Activated B cell treated with CpG ODN at 0.5 μM for 24 hours (primary cell): ENCODE measurements at regions of chrX and their contacts with region 1.

Region 1: DNA sequence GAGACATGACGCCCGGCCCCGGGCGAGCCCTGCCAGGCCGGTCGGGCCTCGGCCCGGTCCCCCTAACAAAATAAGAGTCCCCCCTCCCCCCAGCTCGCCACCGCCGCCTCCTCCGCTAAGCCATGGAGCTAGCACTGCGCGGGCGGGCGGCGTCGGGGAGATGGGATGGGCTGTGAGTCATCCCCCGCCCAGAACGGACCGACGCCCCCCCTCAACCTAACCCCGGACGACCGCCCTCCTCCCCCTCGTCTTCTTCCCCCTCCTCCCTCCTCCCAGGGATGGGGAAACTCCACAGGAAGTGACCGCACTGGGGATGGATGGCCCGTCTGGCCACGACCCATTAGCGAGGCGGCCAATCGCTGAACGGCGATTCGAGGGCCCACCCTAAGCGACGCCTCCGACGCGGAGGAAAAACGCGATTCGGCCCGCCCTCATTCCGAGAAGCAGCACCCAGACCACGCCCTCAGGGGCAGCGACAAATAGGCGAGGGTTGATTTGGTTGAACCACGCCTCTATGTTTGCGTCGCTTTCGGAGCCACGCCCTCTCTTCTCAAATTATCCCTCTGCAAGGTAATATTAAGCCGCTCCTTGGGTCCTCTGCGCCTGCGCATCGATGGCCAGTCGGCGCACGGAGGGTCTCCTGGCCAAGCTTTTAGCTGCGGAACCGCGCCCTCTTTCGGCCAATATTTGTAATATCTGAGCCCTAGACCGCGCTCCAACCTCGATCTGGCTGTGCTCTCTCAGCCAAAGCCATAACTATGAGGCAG is at the start of gene TFE3:
- DNase-seq: peak; percentile 82
- ATAC-seq: peak; percentile 86
- H3K4me3 Mint-ChIP-seq: peak within 1 kb of the TSS; percentile 89
- H3K27ac Mint-ChIP-seq: peak within 1 kb of the TSS; percentile 85
- H3K4me1 Mint-ChIP-seq: peaks cover 33% of the 10 kb centered on the region
- H3K27me3 Mint-ChIP-seq: no peaks in the 10 kb centered on the region
- CTCF ChIP-seq: no peak
- total RNA-seq, gene TFE3: 31.1 and 33.3 TPM in 2 replicates

Region 2: DNA sequence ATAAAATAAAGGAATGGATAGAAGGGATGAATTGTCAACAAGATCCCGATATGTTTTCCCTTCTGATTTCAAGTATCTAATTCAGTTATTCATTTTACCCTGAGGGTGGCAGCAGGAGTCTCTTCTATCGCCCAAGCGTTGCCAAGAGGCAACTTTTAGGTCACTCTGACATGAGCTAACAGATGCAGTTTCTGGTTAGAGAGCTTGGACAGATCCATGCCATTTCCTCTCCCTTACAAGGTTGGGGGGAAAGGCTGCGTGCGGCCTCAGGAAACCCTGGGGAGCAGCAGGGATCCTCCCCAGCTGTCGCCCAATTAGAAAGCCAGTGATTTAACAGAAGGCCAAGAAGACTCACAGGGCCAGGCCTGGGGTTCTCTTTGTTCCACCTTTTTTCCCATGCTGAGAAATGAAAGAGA is 395.1 kb before region 1 on chrX:
- CTCF ChIA-PET with region 1: interaction called, 8 read pairs
- POLR2A ChIA-PET with region 1: no interaction called
- intact Hi-C with region 1: loop called (anchors 1 kb)
- DNase-seq: no peak
- ATAC-seq: peak; percentile 65
- H3K4me3 Mint-ChIP-seq: no peak overlapping the region
- H3K27ac Mint-ChIP-seq: no peak overlapping the region
- H3K4me1 Mint-ChIP-seq: peaks cover 2% of the 10 kb centered on the region
- H3K27me3 Mint-ChIP-seq: no peaks in the 10 kb centered on the region
- CTCF ChIP-seq: no peak

Region 3: DNA sequence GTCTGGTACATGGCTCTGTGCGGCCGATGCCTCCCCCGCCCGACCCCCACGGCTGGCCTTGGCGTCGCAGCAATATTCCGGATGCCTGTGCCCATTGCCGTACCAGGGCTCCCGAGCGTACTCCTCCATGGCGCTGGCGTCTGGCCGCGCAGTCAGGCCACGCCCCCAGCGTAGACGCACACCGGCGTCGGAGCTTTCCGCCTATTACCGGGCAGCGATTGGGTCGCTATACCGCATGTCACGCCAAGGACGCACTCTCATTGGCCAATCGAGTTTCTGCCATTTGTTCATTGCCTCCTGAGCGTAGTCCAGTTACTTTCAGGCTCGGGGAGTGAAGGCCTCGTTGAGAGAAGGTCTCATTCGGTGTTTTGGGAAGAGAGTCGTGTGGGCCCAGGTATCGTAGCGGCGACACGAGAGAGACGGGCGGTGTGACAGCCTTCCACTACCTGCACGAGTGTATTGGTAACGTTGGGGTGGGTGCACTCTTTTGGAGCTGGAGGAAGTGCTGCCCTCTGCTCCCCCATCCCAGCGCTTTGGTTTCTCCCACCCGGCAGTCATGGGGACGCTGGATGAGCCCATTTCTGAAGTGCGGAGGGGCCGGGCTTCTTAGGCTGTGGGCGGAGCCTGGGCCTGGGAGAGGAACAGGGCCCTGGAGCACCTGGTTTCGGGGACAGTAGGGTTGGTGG is 145.6 kb before region 1 on chrX and contains the starts of genes PQBP1 and TIMM17B:
- CTCF ChIA-PET with region 1: no interaction called
- POLR2A ChIA-PET with region 1: no interaction called
- intact Hi-C with region 1: loop called (anchors 1 kb)
- DNase-seq: peak; percentile 73
- ATAC-seq: peak; percentile 86
- H3K4me3 Mint-ChIP-seq: peak within 1 kb of the TSS; percentile 94
- H3K27ac Mint-ChIP-seq: peak within 1 kb of the TSS; percentile 97
- H3K4me1 Mint-ChIP-seq: peaks cover 29% of the 10 kb centered on the region
- H3K27me3 Mint-ChIP-seq: no peaks in the 10 kb centered on the region
- CTCF ChIP-seq: no peak
- total RNA-seq, gene PQBP1: 81.6 and 91.5 TPM in 2 replicates
- total RNA-seq, gene TIMM17B: 47.8 and 52.6 TPM in 2 replicates

Region 4: GRCh38 chrX:49002091-49002935 is 41.1 kb before region 1 on chrX and contains the start of gene GRIPAP1:
- CTCF ChIA-PET with region 1: interaction called, 3 read pairs
- POLR2A ChIA-PET with region 1: interaction called, 39 read pairs
- intact Hi-C with region 1: loop called (anchors 1 kb)
- DNase-seq: peak; percentile 52
- ATAC-seq: peak; percentile 88
- H3K4me3 Mint-ChIP-seq: peak within 1 kb of the TSS; percentile 99
- H3K27ac Mint-ChIP-seq: peak within 1 kb of the TSS; percentile 97
- H3K4me1 Mint-ChIP-seq: peaks cover 24% of the 10 kb centered on the region
- H3K27me3 Mint-ChIP-seq: no peaks in the 10 kb centered on the region
- CTCF ChIP-seq: no peak
- total RNA-seq, gene GRIPAP1: 97.3 and 117 TPM in 2 replicates

Region 5: DNA sequence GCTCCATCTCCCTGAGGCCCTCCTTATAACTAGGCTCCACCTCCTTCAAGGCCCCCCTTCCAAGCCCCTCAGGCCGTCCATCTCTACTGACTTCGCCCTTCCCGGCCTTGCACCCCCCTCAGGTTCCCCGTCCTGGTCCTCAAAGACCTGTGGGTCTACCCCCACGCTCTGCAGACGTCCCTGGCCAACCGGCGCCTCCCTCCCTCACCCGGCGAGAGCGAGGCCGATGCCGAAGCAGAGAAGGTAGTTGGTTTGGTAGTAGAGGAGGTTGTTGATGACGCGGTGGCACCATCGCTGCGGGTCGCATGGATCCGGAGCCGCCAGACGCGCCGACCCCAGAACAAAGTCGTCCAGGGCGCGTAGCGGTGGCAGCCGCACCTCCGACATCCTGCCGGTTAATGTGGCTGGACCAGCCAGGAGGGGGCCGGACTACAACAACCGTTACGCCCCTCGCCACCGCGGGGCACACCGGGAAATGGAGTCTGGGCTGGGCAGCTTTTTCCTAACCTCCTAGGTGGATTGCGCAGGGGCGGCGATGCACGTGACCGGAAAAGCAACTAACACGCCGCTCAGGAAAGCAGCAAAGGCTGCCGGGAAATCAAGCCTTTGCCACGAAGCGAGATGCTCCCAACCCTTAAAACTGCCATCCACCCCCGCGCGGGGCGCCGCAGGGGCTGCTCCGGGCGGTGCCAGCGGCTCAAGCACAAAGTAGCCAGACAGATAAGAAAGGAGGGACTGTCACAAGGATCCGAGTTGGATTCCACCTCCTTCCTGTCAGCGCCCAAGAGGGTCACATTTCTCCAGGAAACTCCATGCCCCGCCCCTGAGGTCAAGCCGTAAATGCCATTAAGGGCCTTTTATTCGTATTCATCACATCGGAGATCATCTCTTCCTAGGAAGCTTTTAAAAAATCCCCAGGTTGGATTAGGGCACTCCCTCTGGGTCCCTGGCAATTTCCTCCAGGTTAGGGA is 30.5 kb after region 1 on chrX and contains the start of gene PRAF2:
- CTCF ChIA-PET with region 1: no interaction called
- POLR2A ChIA-PET with region 1: interaction called, 8 read pairs
- intact Hi-C with region 1: loop called (anchors 1 kb)
- DNase-seq: peak; percentile 76
- ATAC-seq: peak; percentile 99
- H3K4me3 Mint-ChIP-seq: peak within 1 kb of the TSS; percentile 84
- H3K27ac Mint-ChIP-seq: peak within 1 kb of the TSS; percentile 72
- H3K4me1 Mint-ChIP-seq: peaks cover 23% of the 10 kb centered on the region
- H3K27me3 Mint-ChIP-seq: no peaks in the 10 kb centered on the region
- CTCF ChIP-seq: no peak
- total RNA-seq, gene PRAF2: 10.6 and 11.6 TPM in 2 replicates